RWPE1 (cell line): ENCODE measurements at regions of chr10 and their contacts with region 1.

Region 1: DNA sequence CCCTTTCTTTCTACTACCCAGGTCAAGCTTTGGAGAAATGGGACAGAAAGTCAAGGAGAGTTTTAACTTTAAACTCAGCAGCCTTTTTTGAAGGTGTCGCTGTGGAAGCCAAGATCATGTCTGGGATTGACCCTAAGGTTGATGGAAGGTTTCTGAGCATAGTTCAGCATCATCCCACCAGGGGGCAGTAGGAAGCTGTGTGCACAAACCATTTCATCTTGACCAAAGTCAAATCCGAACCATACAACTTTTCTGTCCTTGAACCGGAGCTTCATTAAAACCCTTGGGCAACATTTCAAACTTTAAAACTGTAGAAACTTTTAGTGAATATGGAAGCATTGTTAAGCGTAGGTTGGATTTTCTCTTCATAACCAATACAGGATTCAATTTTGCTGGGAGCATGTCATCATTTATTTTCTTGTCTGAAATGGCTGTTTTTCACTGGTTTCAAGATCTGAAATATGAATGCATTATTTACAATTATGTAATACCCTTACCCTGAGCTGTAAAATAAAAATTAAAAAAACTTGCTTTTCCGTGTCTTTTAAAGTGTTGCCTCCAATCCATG is 214.4 kb upstream of the KIAA1217 start:
- DNase-seq: peak; percentile 60
- H3K27ac ChIP-seq: no peak overlapping the region
- CTCF ChIP-seq: peak; percentile 75

Region 2: GRCh38 chr10:24360282-24361127 is 365.9 kb after region 1 on chr10:
- CTCF ChIA-PET with region 1: interaction called, 14 read pairs
- POLR2A ChIA-PET with region 1: no interaction called
- DNase-seq: peak; percentile 64
- H3K27ac ChIP-seq: no peak overlapping the region
- CTCF ChIP-seq: peak; percentile 83